Dorsolateral prefrontal cortex (tissue), 120 donors: ENCODE measurements at regions of chr5 and their contacts with region 1.

Region 1: DNA sequence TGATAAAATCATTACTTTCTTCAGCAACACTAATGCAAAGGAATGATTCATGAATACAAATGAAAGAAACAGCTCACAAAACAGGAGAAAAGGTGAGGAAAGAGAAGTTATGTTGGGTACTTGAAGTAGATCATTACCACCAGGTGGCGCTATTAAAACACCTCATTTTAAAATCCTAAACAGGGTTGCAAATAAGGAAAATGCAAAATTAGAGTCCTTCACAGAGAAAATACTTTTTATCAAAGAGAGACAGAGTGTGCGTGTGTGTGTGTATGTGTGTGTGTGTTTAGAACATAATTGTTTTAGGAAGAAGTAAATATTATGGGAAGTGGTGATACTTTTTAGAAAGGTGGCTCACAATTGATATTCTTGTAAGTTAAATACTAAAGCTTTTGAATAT is 49.5 kb upstream of the CD180 start:
- DNase-seq: peak in 1 of 10 donors; percentile 40
- H3K4me3 ChIP-seq: no peak overlapping the region
- H3K27ac ChIP-seq: peak overlapping the region in 58 of 59 donors; percentile 18 to 96 (median 81)
- H3K27me3 ChIP-seq: no peaks in the 10 kb centered on the region
- CTCF ChIP-seq: peak; percentile 74 to 100 (median 90)

Region 2: DNA sequence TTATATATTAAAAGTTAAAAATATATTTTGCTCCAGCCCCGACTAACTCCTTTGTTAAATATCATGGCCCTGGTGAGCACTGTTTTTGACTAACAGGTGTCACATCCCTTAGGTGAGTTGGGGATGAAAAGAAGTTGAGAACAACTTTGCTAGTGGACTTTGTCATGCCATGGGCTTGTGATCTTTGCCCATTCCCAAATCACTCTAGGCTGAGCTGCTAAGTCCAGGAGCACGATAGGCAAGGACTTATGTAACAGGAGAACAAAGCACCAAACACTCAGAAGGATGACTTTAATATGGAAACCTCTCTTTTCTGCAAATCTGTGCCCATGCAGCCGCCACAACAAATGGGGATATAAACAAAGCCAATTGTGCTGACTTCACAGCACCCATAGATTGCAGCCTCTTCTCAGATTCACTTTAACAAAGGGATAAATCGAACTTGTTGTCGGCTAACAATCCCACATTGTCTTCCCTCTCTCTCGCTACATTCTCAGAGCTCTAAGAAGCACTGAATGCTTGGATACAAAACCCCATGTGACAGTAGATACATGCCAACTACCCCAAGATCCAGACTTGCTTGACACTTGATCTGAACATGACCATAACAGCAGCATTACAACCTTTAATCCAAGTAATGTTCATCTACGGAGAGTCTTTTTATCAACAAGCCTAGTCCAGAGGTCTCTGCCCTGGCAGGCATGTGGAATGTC is 37.3 kb after region 1 on chr5:
- intact Hi-C with region 1: loop called in 1 of 2 experiments (anchors 5 kb)
- DNase-seq: peak in 6 of 10 donors; percentile 41 to 79 (median 64)
- H3K4me3 ChIP-seq: no peak overlapping the region
- H3K27ac ChIP-seq: peak overlapping the region; percentile 80 to 99 (median 95)
- H3K27me3 ChIP-seq: no peaks in the 10 kb centered on the region
- CTCF ChIP-seq: peak in 1 of 56 donors; percentile 15

Region 3: GRCh38 chr5:67395790-67396418 is 149.8 kb after region 1 on chr5:
- intact Hi-C with region 1: loop called (anchors 2 to 5 kb)
- DNase-seq: peak in 1 of 10 donors; percentile 15
- H3K4me3 ChIP-seq: peak overlapping the region in 1 of 59 donors; percentile 2
- H3K27ac ChIP-seq: peak overlapping the region in 21 of 59 donors; percentile 14 to 73 (median 41)
- H3K27me3 ChIP-seq: no peaks in the 10 kb centered on the region
- CTCF ChIP-seq: peak in 54 of 56 donors; percentile 21 to 82 (median 54)

Region 4: DNA sequence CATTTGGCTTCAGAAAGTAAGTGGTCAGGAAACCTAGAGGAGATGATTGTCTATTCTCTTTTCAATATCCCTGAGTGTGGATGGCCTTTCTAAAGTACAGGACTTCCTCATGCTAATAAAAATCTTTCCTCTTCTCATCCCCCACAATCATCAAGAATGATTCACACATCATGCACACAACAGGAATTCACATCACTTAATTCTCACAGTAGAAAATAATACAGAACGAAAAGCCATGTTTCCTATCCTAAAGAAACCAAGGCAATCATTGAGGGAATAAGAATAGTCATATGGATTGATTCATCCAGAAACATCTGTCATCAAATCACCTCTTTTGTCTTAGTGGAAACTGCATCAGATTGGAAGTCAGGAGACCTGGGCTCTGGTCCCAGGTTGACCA is 766.3 kb after region 1 on chr5:
- intact Hi-C with region 1: loop called in 1 of 2 experiments (anchors 10 kb)
- DNase-seq: no peak
- H3K4me3 ChIP-seq: no peak overlapping the region
- H3K27ac ChIP-seq: no peak overlapping the region
- H3K27me3 ChIP-seq: no peaks in the 10 kb centered on the region
- CTCF ChIP-seq: no peak